ENCODE measurements at regions of chr1 and their contacts with region 1.

Region 1: GRCh38 chr1:208245185-208245705 is 1.1 kb upstream of the PLXNA2 start:
- DNase-seq: peak; percentile 85
- H3K4me3 ChIP-seq: peak overlapping the region; percentile 93 to 96
- H3K27ac ChIP-seq: peak overlapping the region; percentile 57 to 86
- H3K4me1 ChIP-seq: peaks cover under 1 to 42% of the 10 kb centered on the region in 2 experiments; a peak in 3 of 4 replicates
- H3K27me3 ChIP-seq: no peaks in the 10 kb centered on the region
- CTCF ChIP-seq: peak; percentile 83
- EP300 ChIP-seq: peak in 1 of 2 experiments; percentile 46; a peak in 2 of 4 replicates
- RAD21 ChIP-seq: peak; percentile 88

Region 2: GRCh38 chr1:207952617-207953542 is 292.4 kb before region 1 on chr1:
- CTCF ChIA-PET with region 1: no interaction called
- POLR2A ChIA-PET with region 1: no interaction called
- DNase-seq: no peak
- H3K4me3 ChIP-seq: no peak overlapping the region
- H3K27ac ChIP-seq: no peak overlapping the region
- H3K4me1 ChIP-seq: no peaks in the 10 kb centered on the region; a peak in 1 of 4 replicates
- H3K27me3 ChIP-seq: no peaks in the 10 kb centered on the region; the same call in 1 of the 2 replicates
- CTCF ChIP-seq: no peak
- EP300 ChIP-seq: no peak
- RAD21 ChIP-seq: no peak

Region 3: GRCh38 chr1:208036109-208036808 is 209.0 kb before region 1 on chr1:
- CTCF ChIA-PET with region 1: interaction called, 579 read pairs
- POLR2A ChIA-PET with region 1: no interaction called
- DNase-seq: peak; percentile 58
- H3K4me3 ChIP-seq: no peak overlapping the region
- H3K27ac ChIP-seq: no peak overlapping the region
- H3K4me1 ChIP-seq: peaks cover 0 to 4% of the 10 kb centered on the region in 2 experiments; a peak in 1 of 4 replicates
- H3K27me3 ChIP-seq: no peaks in the 10 kb centered on the region
- CTCF ChIP-seq: peak; percentile 42
- EP300 ChIP-seq: no peak
- RAD21 ChIP-seq: peak; percentile 60

Region 4: GRCh38 chr1:208110296-208110695 is 134.9 kb before region 1 on chr1:
- CTCF ChIA-PET with region 1: interaction called, 25 read pairs
- POLR2A ChIA-PET with region 1: no interaction called
- DNase-seq: no peak
- H3K4me3 ChIP-seq: no peak overlapping the region
- H3K27ac ChIP-seq: no peak overlapping the region
- H3K4me1 ChIP-seq: peaks cover 9 to 16% of the 10 kb centered on the region in 2 experiments; a peak in 3 of 4 replicates
- H3K27me3 ChIP-seq: no peaks in the 10 kb centered on the region
- CTCF ChIP-seq: no peak
- EP300 ChIP-seq: no peak
- RAD21 ChIP-seq: no peak

Region 5: GRCh38 chr1:208161656-208162375 is 83.4 kb before region 1 on chr1:
- CTCF ChIA-PET with region 1: interaction called, 26 read pairs
- POLR2A ChIA-PET with region 1: no interaction called
- DNase-seq: peak; percentile 60
- H3K4me3 ChIP-seq: no peak overlapping the region
- H3K27ac ChIP-seq: peak overlapping the region; percentile 89 to 99
- H3K4me1 ChIP-seq: peaks cover 54 to 86% of the 10 kb centered on the region in 2 experiments
- H3K27me3 ChIP-seq: no peaks in the 10 kb centered on the region
- CTCF ChIP-seq: no peak
- EP300 ChIP-seq: peak; percentile 75 to 86
- RAD21 ChIP-seq: no peak

Region 6: DNA sequence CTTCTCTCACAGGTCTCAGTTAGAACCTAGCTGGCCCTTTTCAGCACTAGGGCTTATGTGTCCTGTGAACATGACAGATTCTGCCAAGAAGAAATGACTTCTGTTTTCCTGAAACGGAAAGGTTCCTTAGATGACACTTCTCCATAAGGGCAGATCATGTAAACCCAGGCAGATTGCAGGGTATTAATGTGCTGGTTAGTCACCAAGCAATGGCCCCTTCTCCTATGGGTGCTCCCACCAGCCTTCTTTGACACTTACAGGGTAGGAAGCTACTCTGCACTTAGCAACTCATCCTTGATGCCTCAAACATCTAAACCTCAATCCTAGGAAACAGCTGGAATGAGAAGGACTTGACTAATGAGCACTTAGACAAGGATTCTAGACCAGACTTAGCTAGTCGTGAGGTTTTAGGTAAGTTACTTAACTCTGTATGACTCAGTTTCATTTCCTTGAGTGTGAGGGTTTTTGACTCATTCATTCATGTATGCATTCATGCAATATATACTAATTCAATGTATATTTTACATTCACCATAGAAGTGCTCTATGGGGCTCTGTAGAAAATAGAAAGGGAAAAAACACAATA is 73.0 kb after region 1 on chr1:
- CTCF ChIA-PET with region 1: no interaction called
- POLR2A ChIA-PET with region 1: no interaction called
- DNase-seq: no peak
- H3K4me3 ChIP-seq: no peak overlapping the region
- H3K27ac ChIP-seq: no peak overlapping the region
- H3K4me1 ChIP-seq: no peaks in the 10 kb centered on the region
- H3K27me3 ChIP-seq: no peaks in the 10 kb centered on the region
- CTCF ChIP-seq: no peak
- EP300 ChIP-seq: no peak
- RAD21 ChIP-seq: no peak

Region 7: DNA sequence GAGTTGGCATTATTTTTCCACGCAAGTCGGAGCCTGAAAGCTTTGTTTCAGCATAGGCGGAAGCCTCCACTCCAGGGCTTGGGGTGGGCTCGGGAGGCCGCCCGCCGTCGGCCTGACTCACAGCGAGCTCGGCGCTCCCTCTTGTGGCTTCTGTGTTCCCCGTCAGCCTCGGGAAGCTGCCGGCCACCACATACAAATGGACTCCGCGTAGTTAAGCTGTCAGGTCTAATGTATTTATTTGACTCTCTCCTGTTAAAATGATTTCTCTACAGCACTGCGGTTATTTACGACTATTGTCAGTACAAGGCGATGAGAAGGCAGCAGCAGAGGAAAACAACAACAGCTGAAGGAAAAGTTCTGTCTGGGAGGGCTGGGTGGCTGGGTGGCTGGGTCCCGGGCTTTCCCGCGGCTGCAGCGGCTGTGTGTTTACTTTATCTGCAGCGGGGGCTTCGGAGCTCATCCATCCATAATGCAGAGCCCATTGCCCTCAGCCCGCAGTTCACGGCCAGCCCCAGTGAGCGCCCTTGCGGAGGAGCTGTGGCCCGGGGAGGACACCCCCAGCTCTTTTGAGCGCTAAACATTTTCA is 962.5 kb after region 1 on chr1:
- CTCF ChIA-PET with region 1: interaction called, 40 read pairs
- POLR2A ChIA-PET with region 1: no interaction called
- DNase-seq: peak; percentile 87
- H3K4me3 ChIP-seq: peak overlapping the region; percentile 38 to 49
- H3K27ac ChIP-seq: peak overlapping the region in 1 of 2 experiments; percentile 71; a peak in 2 of 4 replicates
- H3K4me1 ChIP-seq: peaks cover 0 to 23% of the 10 kb centered on the region in 2 experiments; a peak in 3 of 4 replicates
- H3K27me3 ChIP-seq: no peaks in the 10 kb centered on the region
- CTCF ChIP-seq: peak; percentile 87
- EP300 ChIP-seq: no peak
- RAD21 ChIP-seq: peak; percentile 92

Measured in SK-N-SH (cell line).